ENCODE measurements at regions of chr3 and their contacts with region 1.

Region 1: DNA sequence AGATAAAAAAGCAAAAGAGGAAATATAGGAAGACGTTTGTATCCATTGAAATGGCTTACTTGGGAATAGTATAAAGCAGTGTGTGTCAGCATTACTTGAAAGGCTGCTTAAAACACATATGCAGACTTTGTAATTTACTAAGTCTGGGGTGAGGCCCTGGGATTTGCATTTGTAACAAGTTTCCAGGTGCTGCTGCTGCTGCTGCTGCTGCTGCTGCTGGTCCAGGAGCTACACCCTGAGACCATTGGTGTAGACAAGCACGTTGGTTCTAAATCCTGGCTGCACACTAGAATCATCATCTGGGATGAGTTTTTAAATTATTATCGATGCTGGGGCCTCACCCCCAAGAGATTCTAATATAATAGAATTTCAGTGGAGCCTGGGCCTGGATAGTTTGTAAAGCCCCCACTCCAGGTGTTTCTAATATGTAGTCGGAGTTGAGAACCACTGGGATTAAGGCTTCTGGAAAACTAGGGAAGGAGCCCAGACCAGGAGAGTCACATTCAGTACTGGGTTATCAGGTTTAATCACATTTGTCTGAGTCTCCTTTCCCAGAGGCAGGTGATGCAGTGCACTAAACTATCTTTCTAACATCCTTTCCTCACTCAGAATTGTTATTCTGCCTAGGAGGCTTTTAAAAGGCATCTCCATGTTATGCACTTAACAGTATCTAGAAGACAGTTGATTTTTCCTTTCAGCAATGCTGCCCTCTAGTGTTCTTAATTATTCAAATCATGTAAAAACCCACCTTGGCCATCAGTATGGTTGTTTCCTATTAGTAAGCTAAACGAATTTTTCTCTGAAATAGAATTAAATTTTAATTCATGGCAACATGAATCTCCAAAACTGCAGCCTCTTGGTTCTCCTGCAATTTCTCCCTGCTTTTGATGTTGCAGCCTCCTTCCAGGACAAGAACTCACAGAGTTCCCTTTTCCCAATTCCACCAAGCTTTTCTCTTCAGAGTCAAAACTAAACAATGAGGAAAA is 45.4 kb downstream of the SSR3 start:
- DNase-seq: peak; percentile 69
- H3K4me3 ChIP-seq: no peak overlapping the region
- H3K27ac ChIP-seq: no peak overlapping the region
- H3K4me1 ChIP-seq: peaks cover 7% of the 10 kb centered on the region
- CTCF ChIP-seq: peak; percentile 82

Region 2: DNA sequence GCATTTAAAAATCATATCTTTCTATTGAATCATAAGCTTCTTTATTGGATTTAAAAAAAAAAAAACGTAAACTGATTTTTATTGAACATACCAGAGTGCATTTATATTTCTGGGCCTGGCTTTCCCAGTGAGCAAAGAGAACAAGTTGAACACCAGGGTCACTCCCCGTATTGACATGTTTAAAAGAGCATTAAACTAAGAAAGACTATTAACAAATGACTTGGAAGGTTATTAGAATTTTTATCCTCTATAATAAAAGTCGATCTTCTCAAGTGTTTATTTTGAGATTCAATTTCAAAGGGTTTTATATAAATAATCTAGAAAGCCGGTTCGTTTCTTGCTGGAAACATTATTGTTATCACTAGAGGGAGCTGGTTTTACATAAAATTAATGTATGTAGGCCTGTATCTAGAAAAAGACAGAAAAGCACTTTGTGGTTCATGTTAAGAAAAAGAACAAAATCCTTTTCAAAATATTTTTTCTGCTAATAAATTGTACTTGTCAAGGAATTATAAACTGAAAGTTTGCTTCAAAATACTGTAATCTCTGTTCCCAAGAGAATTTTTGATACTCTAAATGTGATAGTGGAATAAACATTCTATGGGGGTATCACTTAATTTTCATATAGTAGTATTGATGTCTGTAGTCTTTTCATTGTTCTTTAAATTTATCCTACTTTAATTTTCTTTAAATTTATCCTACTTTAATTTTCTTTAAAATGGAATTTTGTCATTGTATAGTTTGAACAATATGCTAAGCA is 1751.2 kb before region 1 on chr3:
- CTCF ChIA-PET with region 1: no interaction called
- POLR2A ChIA-PET with region 1: no interaction called
- intact Hi-C with region 1: no loop called
- DNase-seq: peak; percentile 65
- H3K4me3 ChIP-seq: no peak overlapping the region
- H3K27ac ChIP-seq: no peak overlapping the region
- H3K4me1 ChIP-seq: no peaks in the 10 kb centered on the region
- CTCF ChIP-seq: peak; percentile 89

Region 3: DNA sequence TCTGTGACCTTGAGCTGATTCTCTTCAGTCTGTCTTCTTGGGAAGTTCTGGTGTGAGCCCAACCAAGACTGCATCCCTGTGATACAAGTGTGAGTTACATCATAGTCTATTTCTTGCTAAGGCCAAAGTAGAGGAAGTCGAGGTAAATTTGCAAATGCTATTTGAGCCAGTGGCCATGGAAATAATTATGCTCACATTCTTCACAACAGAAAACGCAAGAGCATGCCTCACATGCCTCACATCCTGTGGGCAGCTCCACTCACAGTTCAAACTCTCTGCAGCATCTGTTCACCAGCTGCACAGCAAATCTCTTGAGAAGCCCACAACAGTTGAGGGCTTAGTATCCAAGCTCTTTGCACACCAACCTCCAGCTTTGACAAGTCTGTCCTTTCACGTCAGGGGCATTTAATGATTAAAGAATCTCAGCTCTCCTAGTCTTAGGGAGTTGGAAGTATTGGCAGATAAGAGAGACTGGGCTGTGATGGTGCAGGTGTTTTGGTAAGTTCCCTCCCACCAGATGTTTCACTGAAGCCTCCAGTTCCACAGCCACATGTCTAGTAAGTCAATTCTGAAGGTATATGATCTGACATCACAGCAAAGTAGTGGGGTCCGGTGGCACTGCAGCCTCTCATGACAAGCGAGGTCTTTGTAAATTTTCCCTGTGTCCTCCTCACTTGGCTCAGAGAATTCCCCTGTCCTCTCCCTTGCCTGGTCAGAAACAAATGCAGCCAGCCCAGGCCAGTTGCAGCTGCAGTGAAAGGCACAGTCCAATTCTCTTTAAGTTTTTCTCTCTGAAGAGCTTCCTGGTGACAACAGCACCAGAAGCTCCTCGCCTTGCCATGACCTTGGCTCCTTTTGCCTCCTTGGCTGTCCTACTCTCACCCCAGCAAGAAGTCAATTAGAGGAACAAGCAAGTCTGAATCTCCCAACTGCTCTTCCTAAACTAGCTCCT is 120.7 kb before region 1 on chr3:
- CTCF ChIA-PET with region 1: no interaction called
- POLR2A ChIA-PET with region 1: no interaction called
- intact Hi-C with region 1: loop called (anchors 5 kb)
- DNase-seq: no peak
- H3K4me3 ChIP-seq: no peak overlapping the region
- H3K27ac ChIP-seq: no peak overlapping the region
- H3K4me1 ChIP-seq: no peaks in the 10 kb centered on the region
- CTCF ChIP-seq: no peak

Region 4: DNA sequence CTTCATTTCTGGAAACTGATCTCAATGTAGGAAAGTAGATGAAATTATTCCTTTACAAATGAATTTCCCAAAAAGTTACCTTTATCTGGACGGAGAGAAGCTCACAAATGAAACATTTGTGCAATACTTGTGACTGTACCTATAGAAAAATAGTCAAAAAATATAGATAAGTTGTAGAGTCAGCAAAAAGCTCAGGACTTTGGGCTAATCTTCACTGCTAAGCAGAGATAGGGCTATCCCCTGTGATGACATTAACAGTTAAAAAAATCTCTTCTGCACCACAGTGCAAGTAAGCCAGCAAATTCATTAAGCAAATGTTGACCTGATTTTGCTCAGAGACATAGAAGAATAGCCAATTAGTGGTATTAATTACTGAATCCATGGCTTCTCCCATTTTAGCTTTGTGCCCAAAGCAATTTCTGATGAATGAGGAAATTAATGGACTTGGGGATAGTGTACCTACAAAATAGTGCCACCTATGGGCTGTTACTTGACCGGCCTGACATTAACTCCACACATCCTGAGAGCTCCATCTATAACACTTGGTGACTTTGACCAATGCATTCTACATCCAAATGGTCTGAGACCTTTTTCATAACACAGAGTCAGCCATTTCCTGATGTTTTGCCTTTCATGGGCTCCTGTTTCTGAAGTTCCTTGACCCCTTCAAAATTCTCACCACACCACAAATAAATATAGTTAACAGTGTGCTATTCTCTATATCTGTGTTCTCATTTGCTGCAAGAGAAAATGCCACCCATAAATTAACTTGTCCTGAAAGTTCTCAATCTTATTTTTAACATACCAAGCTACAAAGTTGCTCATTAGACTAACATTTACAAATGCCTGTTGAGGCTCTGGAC is 59.5 kb before region 1 on chr3:
- CTCF ChIA-PET with region 1: no interaction called
- POLR2A ChIA-PET with region 1: no interaction called
- intact Hi-C with region 1: loop called (anchors 2 kb)
- DNase-seq: peak; percentile 29
- H3K4me3 ChIP-seq: no peak overlapping the region
- H3K27ac ChIP-seq: no peak overlapping the region
- H3K4me1 ChIP-seq: no peaks in the 10 kb centered on the region
- CTCF ChIP-seq: peak; percentile 81

Region 5: GRCh38 chr3:156472150-156472549 is 37.3 kb before region 1 on chr3:
- CTCF ChIA-PET with region 1: no interaction called
- POLR2A ChIA-PET with region 1: interaction called, 5 read pairs
- intact Hi-C with region 1: loop called (anchors 1 kb)
- DNase-seq: peak; percentile 8
- H3K4me3 ChIP-seq: no peak overlapping the region
- H3K27ac ChIP-seq: no peak overlapping the region
- H3K4me1 ChIP-seq: no peaks in the 10 kb centered on the region
- CTCF ChIP-seq: peak; percentile 62

Region 6: GRCh38 chr3:156705761-156706631 is 196.5 kb after region 1 on chr3:
- CTCF ChIA-PET with region 1: no interaction called
- POLR2A ChIA-PET with region 1: no interaction called
- intact Hi-C with region 1: no loop called
- DNase-seq: no peak
- H3K4me3 ChIP-seq: no peak overlapping the region
- H3K27ac ChIP-seq: no peak overlapping the region
- H3K4me1 ChIP-seq: peaks cover 8% of the 10 kb centered on the region
- CTCF ChIP-seq: no peak

Measured in OCI-LY7 (cell line).